Right cardiac atrium (tissue), 5 donors: ENCODE measurements at regions of chr2 and their contacts with region 1.

Region 1: DNA sequence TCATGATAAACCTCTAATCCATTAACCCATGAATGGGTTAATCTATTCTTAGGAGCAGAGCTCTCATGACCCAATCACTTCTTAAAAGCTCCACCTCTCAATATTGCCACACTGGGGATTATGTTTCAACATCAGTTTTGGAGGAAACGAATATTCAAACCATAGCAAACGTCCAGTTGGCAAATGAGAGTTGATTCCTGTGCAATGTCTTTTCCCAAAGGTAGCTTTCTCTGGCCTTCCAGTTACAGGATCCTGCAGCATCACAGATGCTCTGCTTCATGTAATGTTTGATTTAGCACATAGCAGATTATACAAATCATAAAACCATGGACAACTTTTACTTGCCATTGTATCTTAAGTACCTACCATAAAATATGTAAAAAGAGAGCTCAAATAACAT is 481.0 kb downstream of the TNS1 start:
- DNase-seq: no peak
- ATAC-seq: peak in 1 of 2 donors; percentile 18
- H3K4me3 ChIP-seq: no peak overlapping the region
- H3K27ac ChIP-seq: no peak overlapping the region
- H3K4me1 ChIP-seq: no peaks in the 10 kb centered on the region
- H3K27me3 ChIP-seq: no peaks in the 10 kb centered on the region

Region 2: GRCh38 chr2:216692636-216693413 is 829.0 kb before region 1 on chr2:
- intact Hi-C with region 1: loop called in 1 of 4 experiments (anchors 5 kb)
- DNase-seq: peak; percentile 83 to 96 (median 95)
- ATAC-seq: peak; percentile 62 to 67
- H3K4me3 ChIP-seq: peak overlapping the region; percentile 33
- H3K27ac ChIP-seq: peak overlapping the region; percentile 88
- H3K4me1 ChIP-seq: peaks cover 13% of the 10 kb centered on the region
- H3K27me3 ChIP-seq: no peaks in the 10 kb centered on the region

Region 3: GRCh38 chr2:217459680-217460405 is 62.0 kb before region 1 on chr2:
- intact Hi-C with region 1: no loop called
- DNase-seq: no peak
- ATAC-seq: no peak
- H3K4me3 ChIP-seq: no peak overlapping the region
- H3K27ac ChIP-seq: no peak overlapping the region
- H3K4me1 ChIP-seq: no peaks in the 10 kb centered on the region
- H3K27me3 ChIP-seq: no peaks in the 10 kb centered on the region

Region 4: GRCh38 chr2:217568289-217568971 is 46.6 kb after region 1 on chr2:
- intact Hi-C with region 1: no loop called
- DNase-seq: no peak
- ATAC-seq: no peak
- H3K4me3 ChIP-seq: no peak overlapping the region
- H3K27ac ChIP-seq: no peak overlapping the region
- H3K4me1 ChIP-seq: no peaks in the 10 kb centered on the region
- H3K27me3 ChIP-seq: no peaks in the 10 kb centered on the region